Gastrocnemius medialis (tissue), 4 donors: ENCODE measurements at regions of chr16 and their contacts with region 1.

Region 1: GRCh38 chr16:57519796-57520360 is 16.5 kb downstream of the CCDC102A start:
- DNase-seq: peak; percentile 25 to 52
- ATAC-seq: peak; percentile 65 to 77
- H3K4me3 ChIP-seq: no peak overlapping the region
- H3K27ac ChIP-seq: no peak overlapping the region
- H3K4me1 ChIP-seq: no peaks in the 10 kb centered on the region
- H3K27me3 ChIP-seq: no peaks in the 10 kb centered on the region
- CTCF ChIP-seq: peak; percentile 80 to 96 (median 90)
- POLR2A ChIP-seq: no peak

Region 2: GRCh38 chr16:57422026-57422944 is 97.6 kb before region 1 on chr16:
- in situ Hi-C with region 1: loop called in 2 of 4 experiments (anchors 5 to 10 kb)
- intact Hi-C with region 1: loop called (anchors 1 kb)
- DNase-seq: no peak
- ATAC-seq: peak; percentile 17 to 42
- H3K4me3 ChIP-seq: no peak overlapping the region
- H3K27ac ChIP-seq: no peak overlapping the region
- H3K4me1 ChIP-seq: peaks cover 6 to 10% of the 10 kb centered on the region in 2 donors
- H3K27me3 ChIP-seq: no peaks in the 10 kb centered on the region
- CTCF ChIP-seq: peak in 2 of 5 experiments; percentile 41 to 47
- POLR2A ChIP-seq: no peak

Region 3: DNA sequence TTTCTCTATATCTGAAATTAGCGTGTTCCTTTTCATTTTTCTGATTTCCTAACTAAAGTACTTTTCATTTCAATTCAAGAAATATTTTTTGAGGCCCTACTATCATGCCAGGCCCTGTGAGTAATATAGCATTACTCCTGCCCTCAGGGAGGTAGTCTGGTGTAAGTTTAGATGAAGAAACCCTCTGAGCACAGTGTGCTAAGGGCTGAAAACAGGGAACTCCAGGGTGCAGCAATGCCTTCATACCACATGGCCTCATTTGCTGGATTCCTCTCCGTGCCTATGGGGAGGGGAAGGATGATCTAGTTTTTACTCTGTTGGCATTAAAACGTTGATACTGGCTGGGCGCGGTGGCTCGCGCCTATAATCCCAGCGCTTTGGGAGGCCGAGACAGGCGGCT is 67.9 kb before region 1 on chr16:
- in situ Hi-C with region 1: no loop called
- intact Hi-C with region 1: no loop called
- DNase-seq: no peak
- ATAC-seq: no peak
- H3K4me3 ChIP-seq: no peak overlapping the region
- H3K27ac ChIP-seq: no peak overlapping the region
- H3K4me1 ChIP-seq: peaks cover 14 to 15% of the 10 kb centered on the region in 2 donors
- H3K27me3 ChIP-seq: no peaks in the 10 kb centered on the region
- CTCF ChIP-seq: no peak
- POLR2A ChIP-seq: no peak

Region 4: DNA sequence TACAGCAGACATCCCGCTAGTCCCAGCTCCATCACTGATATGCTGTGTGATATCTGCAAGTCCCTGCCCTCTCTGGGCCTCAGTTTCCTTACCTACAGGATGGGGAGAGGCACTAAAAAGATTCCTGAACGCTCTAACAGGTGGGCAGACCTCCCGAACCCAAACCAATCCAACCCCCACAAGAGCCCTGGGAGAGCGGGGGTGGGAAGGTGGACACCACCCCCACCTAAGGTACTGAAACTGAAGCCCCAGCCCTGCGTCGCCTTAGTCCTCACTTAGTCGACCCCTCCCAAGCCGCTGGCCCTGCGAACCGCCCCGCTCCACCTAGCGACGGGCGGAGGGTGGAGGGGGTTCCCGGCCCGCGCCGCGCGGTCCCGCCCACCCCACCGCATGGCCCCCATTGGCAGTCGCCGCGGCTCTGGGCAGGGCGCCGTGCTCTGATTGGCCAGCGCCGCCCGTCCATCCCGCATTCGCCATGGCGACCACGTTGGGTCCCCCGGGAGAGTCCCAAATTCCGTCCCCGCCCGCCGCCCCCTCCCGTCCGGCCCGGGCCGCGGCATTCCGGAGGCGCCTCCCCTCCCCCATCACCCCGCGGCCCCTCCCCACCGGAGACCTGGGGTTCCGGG is 15.9 kb after region 1 on chr16:
- in situ Hi-C with region 1: no loop called
- intact Hi-C with region 1: no loop called
- DNase-seq: peak; percentile 78 to 86
- ATAC-seq: peak; percentile 85 to 90
- H3K4me3 ChIP-seq: peak overlapping the region; percentile 73 to 94 (median 83)
- H3K27ac ChIP-seq: peak overlapping the region; percentile 65 to 83 (median 76)
- H3K4me1 ChIP-seq: peaks cover 0 to 6% of the 10 kb centered on the region in 2 donors
- H3K27me3 ChIP-seq: no peaks in the 10 kb centered on the region
- CTCF ChIP-seq: peak in 2 of 5 experiments; percentile 17 to 22
- POLR2A ChIP-seq: no peak